RWPE1 (cell line): ENCODE measurements at regions of chr6 and their contacts with region 1.

Region 1: DNA sequence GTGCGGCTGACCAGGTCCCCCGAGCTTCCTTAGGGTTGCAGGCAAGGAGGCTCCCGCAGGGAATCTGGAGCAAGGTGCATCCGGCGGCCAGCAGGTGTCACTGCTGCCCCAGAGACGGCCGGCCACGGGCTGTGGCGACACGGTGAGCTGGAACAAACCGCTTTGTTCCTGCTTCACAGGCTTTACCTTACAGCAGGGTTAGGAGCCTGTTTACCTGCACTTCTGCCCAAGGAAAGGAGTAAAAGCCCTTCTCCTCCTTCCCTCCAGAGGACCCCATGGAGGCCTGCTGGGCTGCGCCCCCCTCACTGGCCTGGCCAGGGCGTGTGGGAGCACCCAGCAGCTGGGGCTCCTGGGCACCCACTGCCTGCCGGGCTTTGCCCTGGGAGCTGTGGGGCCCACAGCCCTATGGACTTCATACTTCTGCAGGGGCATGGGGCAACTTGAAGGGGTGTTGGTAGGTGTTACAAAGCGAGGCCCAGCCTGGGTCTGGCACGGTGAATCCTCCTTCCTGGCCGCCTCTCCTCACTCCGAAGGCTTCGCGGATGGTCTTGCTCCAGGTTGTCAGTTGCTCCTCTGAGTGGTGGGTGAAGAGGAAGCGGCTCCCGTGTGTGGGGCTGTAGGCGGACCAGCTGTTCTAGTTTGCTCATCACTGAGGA is 88.4 kb downstream of the CDC5L start:
- DNase-seq: peak; percentile 84
- H3K27ac ChIP-seq: no peak overlapping the region
- CTCF ChIP-seq: peak; percentile 91

Region 2: GRCh38 chr6:44489910-44490604 is 14.2 kb after region 1 on chr6:
- CTCF ChIA-PET with region 1: interaction called, 15 read pairs
- POLR2A ChIA-PET with region 1: no interaction called
- DNase-seq: peak; percentile 88
- H3K27ac ChIP-seq: peak overlapping the region; percentile 95
- CTCF ChIP-seq: no peak

Region 3: DNA sequence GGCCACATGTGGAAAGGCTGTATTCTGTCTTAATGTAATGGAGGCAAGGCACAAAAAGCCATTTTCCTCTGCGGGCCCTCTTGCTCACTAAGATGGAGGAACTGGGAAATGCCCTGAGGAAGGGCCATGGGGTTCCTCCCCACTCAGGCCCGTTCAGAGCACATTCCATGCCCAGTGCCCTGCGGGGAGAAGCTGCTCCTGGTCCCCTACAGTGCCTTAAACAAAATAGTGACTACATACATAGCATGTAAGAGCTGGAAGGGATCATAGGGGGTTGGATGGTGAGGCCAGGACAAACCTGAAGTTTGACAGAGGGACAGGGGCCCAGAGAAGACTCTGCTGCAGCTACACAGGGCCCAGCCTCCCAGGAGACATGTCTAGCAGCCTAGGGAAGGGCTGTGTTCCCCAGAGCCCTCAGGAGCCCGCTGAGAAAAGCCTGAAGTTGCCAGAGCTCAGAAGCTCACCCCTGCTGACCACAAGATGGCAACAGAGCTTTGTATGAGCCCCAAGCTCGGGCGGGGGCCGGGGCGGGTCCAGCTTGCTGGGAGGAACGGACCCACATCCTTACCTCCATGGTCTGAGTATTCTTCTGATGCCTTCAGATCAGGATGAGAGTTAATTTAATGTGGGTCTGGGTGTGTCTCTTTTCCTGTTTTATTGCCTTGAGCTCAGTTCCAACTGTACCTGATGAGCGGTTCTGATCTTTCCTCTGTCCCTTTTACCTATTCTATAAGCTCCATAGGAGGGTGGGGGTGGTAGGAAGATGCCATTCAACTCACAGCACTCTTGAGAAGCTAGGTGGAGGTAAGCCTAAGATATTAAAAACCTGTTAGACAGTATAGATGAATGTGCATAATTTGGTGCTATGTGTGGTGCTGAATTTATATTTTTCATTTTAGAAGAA is 154.5 kb after region 1 on chr6:
- CTCF ChIA-PET with region 1: interaction called, 28 read pairs
- POLR2A ChIA-PET with region 1: no interaction called
- DNase-seq: peak; percentile 70
- H3K27ac ChIP-seq: no peak overlapping the region
- CTCF ChIP-seq: peak; percentile 36

Region 4: DNA sequence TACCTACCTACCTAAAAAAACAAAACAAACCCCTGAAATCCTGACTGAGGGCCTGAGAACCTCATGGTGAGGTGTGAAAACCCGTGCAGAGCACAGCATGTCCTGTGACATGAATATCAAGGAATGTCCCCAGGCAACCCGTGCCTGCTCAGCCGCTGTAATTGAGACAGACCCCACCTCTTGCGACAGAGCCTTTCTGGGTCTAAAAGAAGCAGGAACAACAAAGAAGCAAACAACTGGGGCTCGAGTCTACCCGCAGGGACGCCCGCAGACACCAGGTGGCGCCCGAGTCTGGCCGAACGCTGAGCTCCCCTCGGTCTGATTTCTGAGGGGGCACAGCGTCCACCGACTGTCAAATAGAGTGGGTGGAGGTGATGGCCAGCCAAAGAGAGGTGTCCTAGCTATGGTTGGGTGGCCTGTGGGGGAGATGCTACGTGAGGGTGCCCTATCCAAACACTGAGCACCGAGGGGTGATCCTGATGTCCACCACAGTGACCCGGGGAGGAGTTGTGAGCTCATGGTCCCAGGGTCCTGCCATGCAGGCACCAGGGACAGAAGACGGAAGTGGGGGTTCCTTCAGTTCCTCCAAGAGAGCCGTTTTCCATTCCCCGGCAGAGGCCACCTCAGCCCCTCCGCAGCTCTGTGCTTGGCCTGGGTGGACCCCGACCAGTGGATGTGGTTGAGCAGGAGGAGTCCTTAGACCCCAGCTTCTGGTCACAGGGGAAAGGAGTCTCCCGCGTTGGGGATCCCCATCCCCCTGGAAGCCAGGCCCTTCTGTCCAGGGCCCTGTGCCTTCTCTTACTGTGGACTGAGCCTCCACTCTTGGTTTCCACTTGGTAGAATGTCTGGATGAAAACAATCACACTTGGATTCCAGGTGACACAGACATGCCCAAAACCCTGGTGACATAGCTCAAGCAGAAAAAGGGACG is 179.8 kb after region 1 on chr6:
- CTCF ChIA-PET with region 1: interaction called, 12 read pairs
- POLR2A ChIA-PET with region 1: no interaction called
- DNase-seq: peak; percentile 52
- H3K27ac ChIP-seq: no peak overlapping the region
- CTCF ChIP-seq: peak; percentile 91

Region 5: DNA sequence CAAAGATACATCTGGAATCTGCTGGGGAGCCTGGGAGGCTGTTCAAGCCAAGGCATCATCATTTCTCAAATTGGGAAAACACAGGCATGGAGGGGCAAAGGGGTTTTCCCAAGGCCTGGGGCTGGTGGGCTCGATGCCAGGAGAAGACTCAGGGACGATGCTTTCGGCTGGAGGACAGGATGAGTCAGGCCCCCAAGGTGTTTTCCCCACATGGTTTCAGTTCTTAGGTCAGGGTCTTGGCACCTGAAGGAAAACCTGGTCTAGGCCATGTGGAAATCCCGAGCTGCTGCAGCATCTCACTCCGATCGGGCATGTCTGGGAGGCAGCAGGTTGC is 259.7 kb after region 1 on chr6:
- CTCF ChIA-PET with region 1: no interaction called
- POLR2A ChIA-PET with region 1: no interaction called
- DNase-seq: peak; percentile 45
- H3K27ac ChIP-seq: no peak overlapping the region
- CTCF ChIP-seq: no peak

Region 6: DNA sequence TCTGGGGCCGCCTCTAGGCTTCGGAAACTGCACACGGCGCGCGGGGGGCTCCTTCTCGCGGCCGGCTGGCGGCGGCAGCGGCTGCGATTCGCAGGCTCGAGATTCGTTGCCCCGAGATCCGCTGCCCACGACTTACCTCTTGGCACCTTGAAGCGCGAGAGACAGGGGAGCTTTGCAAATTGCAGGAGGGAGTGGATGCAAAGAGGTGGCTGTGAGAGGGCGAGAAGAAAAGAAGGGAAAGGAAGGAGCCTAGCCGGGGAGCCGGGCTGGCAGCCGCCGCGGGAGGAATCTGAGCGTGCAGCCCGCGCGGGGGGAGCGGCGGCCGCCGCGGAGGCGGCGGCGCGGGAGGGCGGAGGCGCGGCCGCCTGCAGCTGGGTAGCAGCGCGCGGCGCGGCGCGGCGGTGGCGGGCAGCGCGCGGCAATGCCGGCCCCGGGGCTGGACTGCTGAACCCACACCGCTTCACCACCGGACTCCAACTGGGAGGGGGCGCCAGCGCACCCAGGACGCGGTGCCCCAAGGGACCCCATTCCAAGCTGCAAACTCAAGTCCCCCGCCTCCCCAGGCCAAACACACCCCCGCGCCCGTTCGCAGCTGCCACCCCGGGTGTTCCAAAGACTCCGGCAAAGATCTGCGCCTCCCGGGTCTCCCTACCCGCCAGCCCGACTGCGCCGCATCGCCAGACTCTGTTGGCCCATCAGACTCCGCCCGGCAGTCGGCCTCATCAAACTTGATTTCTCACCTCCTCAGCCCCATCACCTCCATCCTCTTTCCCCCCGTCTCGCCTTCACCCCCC is 946.0 kb after region 1 on chr6:
- CTCF ChIA-PET with region 1: interaction called, 18 read pairs
- POLR2A ChIA-PET with region 1: no interaction called
- DNase-seq: no peak
- H3K27ac ChIP-seq: peak overlapping the region; percentile 78
- CTCF ChIP-seq: peak; percentile 58